ENCODE measurements at regions of chr17 and their contacts with region 1.

Region 1: DNA sequence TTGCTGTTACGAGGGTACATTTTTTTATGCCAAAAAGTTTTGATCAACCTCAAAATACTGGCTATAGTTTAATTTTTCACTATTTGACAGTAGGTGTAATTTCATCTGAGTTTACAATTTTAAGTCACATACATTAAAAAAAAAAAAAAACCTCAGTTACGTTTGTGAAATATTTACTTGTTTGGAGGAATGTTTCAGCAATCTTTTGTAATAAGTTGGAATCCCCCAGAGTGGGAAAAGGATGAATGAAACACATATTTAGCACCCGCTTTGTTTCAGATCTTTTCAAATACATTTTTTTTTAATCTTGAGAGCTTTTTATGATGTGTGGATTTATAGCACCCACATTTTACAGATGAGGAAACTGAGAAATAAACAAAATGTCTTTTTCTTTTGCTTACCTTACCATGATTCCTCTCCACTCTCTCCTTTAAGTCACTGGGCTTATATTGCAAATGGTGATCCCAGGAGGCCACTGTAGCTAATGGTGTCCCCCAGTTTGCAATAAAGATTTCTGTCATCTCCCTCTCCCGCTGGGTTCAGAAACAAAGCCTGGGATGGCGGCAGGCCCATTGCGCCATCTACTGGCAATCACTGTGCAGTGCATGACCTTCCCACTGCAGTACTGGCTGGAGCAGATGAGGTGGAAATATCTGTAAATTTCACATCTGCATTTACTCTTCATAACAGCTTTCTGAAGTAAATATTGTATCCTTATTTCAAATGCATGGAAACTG is 27.7 kb downstream of the TBC1D3B start:
- DNase-seq: peak; percentile 19 to 76
- H3K4me3 ChIP-seq: no peak overlapping the region
- H3K27ac ChIP-seq: no peak overlapping the region
- H3K4me1 ChIP-seq: no peaks in the 10 kb centered on the region
- H3K27me3 ChIP-seq: no peaks in the 10 kb centered on the region
- CTCF ChIP-seq: peak; percentile 90 to 99 (median 95)
- EP300 ChIP-seq: no peak
- POLR2A ChIP-seq: no peak
- RAD21 ChIP-seq: peak; percentile 95 to 96

Region 2: GRCh38 chr17:35731239-35731931 is 417.3 kb before region 1 on chr17 and contains the start of gene RASL10B:
- CTCF ChIA-PET with region 1: no interaction called
- POLR2A ChIA-PET with region 1: no interaction called
- DNase-seq: peak in 1 of 2 experiments; percentile 85
- H3K4me3 ChIP-seq: peak within 1 kb of the TSS; percentile 67 to 85 (median 78)
- H3K27ac ChIP-seq: no peak within 1 kb of the TSS
- H3K4me1 ChIP-seq: peaks cover 7 to 26% (median 8%) of the 10 kb centered on the region in 4 experiments; a peak in 6 of 7 replicates
- H3K27me3 ChIP-seq: peaks cover 0 to 8% (median 5%) of the 10 kb centered on the region in 4 experiments; a peak in 4 of 7 replicates
- CTCF ChIP-seq: no peak
- EP300 ChIP-seq: no peak
- POLR2A ChIP-seq: no peak
- RAD21 ChIP-seq: no peak; a peak in 1 of 4 replicates
- total RNA-seq, gene RASL10B: 21.6 and 22.8 TPM in 2 replicates

Region 3: GRCh38 chr17:35969558-35970380 is 179.0 kb before region 1 on chr17:
- CTCF ChIA-PET with region 1: interaction called, 46 read pairs
- POLR2A ChIA-PET with region 1: no interaction called
- DNase-seq: peak; percentile 60 to 87
- H3K4me3 ChIP-seq: no peak overlapping the region
- H3K27ac ChIP-seq: no peak overlapping the region
- H3K4me1 ChIP-seq: peaks cover 0 to 2% (median 0%) of the 10 kb centered on the region in 4 experiments; a peak in 2 of 7 replicates
- H3K27me3 ChIP-seq: no peaks in the 10 kb centered on the region
- CTCF ChIP-seq: peak; percentile 15 to 88 (median 81)
- EP300 ChIP-seq: no peak
- POLR2A ChIP-seq: no peak
- RAD21 ChIP-seq: peak; percentile 95

Region 4: DNA sequence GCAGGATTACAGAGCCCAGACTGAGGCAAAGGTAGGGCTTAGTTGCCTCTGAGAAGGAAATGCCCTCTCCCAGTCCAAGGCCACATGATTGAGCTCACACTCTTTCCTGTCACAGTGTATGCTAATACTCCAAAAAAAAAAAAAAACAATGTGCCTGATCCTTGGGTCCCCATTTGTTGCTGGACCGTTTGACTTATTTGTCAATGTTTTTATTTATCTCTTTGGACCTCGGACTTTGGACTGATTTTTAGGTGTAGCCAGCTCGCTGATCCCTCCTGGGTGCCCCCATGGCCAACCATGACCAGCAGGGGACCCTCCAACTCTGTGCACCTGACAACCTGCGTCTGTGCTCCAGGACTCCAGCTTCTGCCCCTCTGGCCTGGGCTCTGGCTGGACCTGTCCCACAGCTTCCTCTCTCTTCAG is 166.8 kb before region 1 on chr17:
- CTCF ChIA-PET with region 1: interaction called, 13 read pairs
- POLR2A ChIA-PET with region 1: no interaction called
- DNase-seq: no peak
- H3K4me3 ChIP-seq: no peak overlapping the region
- H3K27ac ChIP-seq: no peak overlapping the region
- H3K4me1 ChIP-seq: no peaks in the 10 kb centered on the region
- H3K27me3 ChIP-seq: no peaks in the 10 kb centered on the region
- CTCF ChIP-seq: peak; percentile 44 to 52 (median 48)
- EP300 ChIP-seq: no peak
- POLR2A ChIP-seq: no peak
- RAD21 ChIP-seq: peak; percentile 67 to 74

Region 5: GRCh38 chr17:36117505-36118382 is 31.0 kb before region 1 on chr17:
- CTCF ChIA-PET with region 1: interaction called, 11 read pairs
- POLR2A ChIA-PET with region 1: no interaction called
- DNase-seq: no peak
- H3K4me3 ChIP-seq: no peak overlapping the region
- H3K27ac ChIP-seq: no peak overlapping the region
- H3K4me1 ChIP-seq: no peaks in the 10 kb centered on the region; a peak in 1 of 7 replicates
- H3K27me3 ChIP-seq: no peaks in the 10 kb centered on the region
- CTCF ChIP-seq: no peak
- EP300 ChIP-seq: no peak
- POLR2A ChIP-seq: no peak
- RAD21 ChIP-seq: no peak

Region 6: GRCh38 chr17:36133602-36134236 is 15.0 kb before region 1 on chr17:
- CTCF ChIA-PET with region 1: interaction called, 20 read pairs
- POLR2A ChIA-PET with region 1: no interaction called
- DNase-seq: no peak
- H3K4me3 ChIP-seq: no peak overlapping the region
- H3K27ac ChIP-seq: no peak overlapping the region
- H3K4me1 ChIP-seq: no peaks in the 10 kb centered on the region
- H3K27me3 ChIP-seq: no peaks in the 10 kb centered on the region
- CTCF ChIP-seq: no peak
- EP300 ChIP-seq: no peak
- POLR2A ChIP-seq: no peak
- RAD21 ChIP-seq: no peak